Mucosa of descending colon (tissue), 3 donors: ENCODE measurements at regions of chr22 and their contacts with region 1.

Region 1: DNA sequence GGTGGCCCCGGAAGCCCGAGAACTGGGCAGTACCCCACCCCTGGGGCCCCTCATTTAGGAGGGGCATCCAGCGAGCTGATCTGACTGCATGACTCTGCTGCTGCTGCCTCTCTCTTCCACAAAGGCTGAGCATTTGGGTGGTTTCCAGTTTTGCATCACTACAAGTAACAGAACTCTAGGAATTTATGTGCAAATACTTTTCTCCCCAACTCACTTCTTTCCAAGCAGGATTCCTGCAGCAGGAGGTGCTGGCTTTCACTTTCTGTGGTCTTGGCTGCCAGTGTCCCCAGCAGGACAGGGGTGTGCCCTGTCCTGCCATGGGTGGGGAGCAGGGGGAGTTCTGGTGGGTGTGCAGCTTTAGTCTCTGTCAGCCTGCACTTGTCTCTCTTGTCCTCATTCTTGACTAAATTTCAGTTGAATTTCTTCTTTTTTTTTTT is 21.2 kb downstream of the UPB1 start:
- DNase-seq: no peak
- ATAC-seq: no peak
- H3K4me3 ChIP-seq: no peak overlapping the region
- H3K4me1 ChIP-seq: peaks cover 6% of the 10 kb centered on the region
- CTCF ChIP-seq: no peak

Region 2: DNA sequence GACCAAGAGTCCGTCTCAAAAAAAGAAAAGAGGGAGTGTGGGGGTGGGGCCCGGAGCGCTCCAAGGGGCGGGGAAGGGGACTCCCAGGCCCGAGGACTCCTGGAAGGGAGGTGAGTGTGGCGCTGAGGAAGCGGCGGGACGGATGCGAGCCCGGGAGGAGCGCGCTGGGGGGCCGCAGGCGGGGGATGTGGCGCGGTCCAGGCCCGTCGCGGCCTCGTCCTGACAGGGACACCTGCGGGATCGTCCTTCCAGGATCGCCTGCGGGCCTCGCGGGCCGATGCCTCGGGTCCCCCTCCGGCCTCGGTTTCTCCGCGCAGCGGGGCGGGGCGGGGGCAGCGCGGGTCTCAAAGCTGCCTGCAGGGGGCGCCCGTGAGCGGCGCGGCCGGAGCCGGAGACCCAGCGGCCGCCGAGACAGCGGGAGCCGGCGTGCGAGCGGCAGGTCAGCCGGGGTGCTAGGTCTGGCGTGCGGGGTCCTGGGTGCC is 92.8 kb before region 1 on chr22:
- intact Hi-C with region 1: loop called (anchors 10 kb)
- DNase-seq: peak; percentile 60 to 76 (median 75)
- ATAC-seq: peak; percentile 69
- H3K4me3 ChIP-seq: no peak overlapping the region
- H3K4me1 ChIP-seq: peaks cover 13% of the 10 kb centered on the region
- CTCF ChIP-seq: peak; percentile 96

Region 3: GRCh38 chr22:24564376-24565058 is 48.2 kb after region 1 on chr22:
- intact Hi-C with region 1: no loop called
- DNase-seq: no peak
- ATAC-seq: no peak
- H3K4me3 ChIP-seq: no peak overlapping the region
- H3K4me1 ChIP-seq: no peaks in the 10 kb centered on the region
- CTCF ChIP-seq: no peak